Posterior vena cava (tissue), 2 donors: ENCODE measurements at regions of chr3 and their contacts with region 1.

Region 1: DNA sequence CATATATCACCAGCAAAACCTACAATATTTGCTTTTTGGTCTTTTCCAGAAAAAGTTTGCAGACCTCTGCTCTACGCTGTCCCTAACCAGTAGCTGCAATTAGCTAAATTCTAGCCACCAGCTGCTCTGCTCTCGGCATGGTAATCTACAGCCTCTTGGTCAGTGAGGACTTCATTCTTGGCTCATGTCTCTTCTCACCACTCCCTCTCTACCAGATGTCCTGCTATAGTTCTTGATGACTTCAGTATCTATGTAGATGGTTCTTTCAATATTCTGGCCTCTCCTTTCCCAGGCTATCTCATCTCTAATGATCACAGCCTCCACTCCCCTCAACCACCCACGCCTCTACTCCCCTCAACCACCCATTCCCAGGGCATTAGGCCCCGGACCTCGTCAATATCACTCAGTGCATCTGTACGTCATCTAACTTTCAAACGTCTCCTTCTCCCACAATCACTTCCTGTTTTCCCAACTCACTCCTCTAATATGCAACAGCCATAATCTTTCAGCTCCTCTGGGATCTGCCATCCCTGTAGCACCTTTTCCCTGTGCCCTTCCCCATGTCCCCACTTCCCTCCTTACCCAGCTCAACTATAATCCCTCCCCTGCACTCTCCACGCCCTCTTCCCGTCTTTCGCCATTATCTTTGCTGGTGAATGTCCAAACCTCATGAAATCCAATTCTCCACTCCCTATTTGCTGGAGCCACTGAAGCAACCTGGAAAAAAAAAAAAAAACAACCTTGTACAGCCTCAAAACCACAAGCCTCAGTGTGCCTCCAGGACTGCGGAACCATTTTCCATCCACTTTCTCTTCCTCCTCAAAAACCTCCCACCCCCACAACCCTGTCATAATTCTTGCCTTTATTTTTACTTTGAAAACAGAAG is 429.4 kb upstream of the PROK2 start:
- DNase-seq: no peak

Region 2: DNA sequence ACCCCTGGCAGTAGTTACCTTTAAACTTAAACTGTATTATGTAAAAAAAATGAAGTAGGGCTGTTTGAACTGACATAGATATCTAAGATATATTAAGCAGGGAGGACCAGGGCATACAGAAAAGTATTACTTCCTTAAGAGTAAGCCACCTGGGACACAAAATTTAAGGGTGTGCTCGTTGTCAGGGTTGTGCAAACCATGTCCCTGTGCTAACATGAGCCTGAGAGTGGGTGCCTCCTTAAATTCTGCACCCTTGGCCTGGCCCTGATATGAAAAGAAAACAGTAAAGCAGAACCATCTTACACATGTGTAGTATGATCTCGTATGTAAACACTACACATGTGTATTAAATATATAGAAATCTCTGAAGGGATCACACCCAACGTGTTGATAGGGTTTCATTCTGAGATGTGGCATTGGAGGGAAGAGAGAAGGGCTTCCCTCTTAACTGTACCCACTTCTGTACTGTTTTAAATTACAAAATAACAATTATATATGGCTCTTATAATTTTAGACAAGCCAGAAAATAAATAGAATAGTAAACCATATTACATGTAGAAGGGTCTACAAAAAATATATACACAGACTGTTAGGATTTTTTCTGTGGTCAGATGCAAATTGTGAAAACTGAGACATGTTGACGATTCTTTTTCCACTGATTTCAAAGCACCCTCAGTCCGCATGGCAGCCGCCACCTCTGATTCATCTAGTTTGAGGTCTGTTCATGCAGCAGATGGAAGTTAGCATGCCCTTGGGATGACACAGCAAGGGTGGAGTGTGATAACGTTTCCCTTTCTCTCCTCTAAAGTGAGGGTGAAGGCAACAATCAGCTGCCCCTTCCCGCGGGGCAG is 28.5 kb before region 1 on chr3:
- intact Hi-C with region 1: no loop called
- DNase-seq: peak; percentile 86

Region 3: GRCh38 chr3:72329354-72329753 is 115.0 kb after region 1 on chr3:
- intact Hi-C with region 1: no loop called
- DNase-seq: no peak

Region 4: GRCh38 chr3:72401005-72401545 is 186.8 kb after region 1 on chr3:
- intact Hi-C with region 1: no loop called
- DNase-seq: no peak

Region 5: GRCh38 chr3:73459711-73460110 is 1245.4 kb after region 1 on chr3:
- intact Hi-C with region 1: loop called in 1 of 2 experiments (anchors 5 kb)
- DNase-seq: no peak